Activated T-helper 2 cell treated with anti-CD3 and anti-CD28 coated beads, Interferon-gamma antibody, Interleukin-2, Interleukin-4, amounts not matched to agents 10 μg/mL and 5 μg/mL and 100 μg/mL, durations not matched to agents 14 hours and 24 hours and 36 hours (primary cell): ENCODE measurements at regions of chr12 and their contacts with region 1.

Region 1: GRCh38 chr12:110501752-110502738 is at the starts of genes RAD9B and VPS29:
- DNase-seq: peak; percentile 99
- H3K4me3 Mint-ChIP-seq: peak within 1 kb of the TSS; percentile 88
- H3K27ac Mint-ChIP-seq: peak within 1 kb of the TSS; percentile 91
- H3K4me1 Mint-ChIP-seq: peaks cover 24% of the 10 kb centered on the region
- H3K27me3 Mint-ChIP-seq: no peaks in the 10 kb centered on the region
- total RNA-seq, gene RAD9B: 0.28 and 0.41 TPM in 2 replicates
- total RNA-seq, gene VPS29: 103 and 107 TPM in 2 replicates

Region 2: GRCh38 chr12:110449799-110450497 is 52.1 kb before region 1 on chr12 and contains the start of gene ARPC3:
- intact Hi-C with region 1: loop called (anchors 1 kb)
- DNase-seq: peak; percentile 95
- H3K4me3 Mint-ChIP-seq: peak within 1 kb of the TSS; percentile 100
- H3K27ac Mint-ChIP-seq: peak within 1 kb of the TSS; percentile 99
- H3K4me1 Mint-ChIP-seq: peaks cover 24% of the 10 kb centered on the region
- H3K27me3 Mint-ChIP-seq: no peaks in the 10 kb centered on the region
- total RNA-seq, gene ARPC3: 312 and 338 TPM in 2 replicates

Region 3: GRCh38 chr12:110531741-110532333 is 29.8 kb after region 1 on chr12:
- intact Hi-C with region 1: no loop called
- DNase-seq: no peak
- H3K4me3 Mint-ChIP-seq: no peak overlapping the region
- H3K27ac Mint-ChIP-seq: peak overlapping the region; percentile 57
- H3K4me1 Mint-ChIP-seq: peaks cover 27% of the 10 kb centered on the region
- H3K27me3 Mint-ChIP-seq: no peaks in the 10 kb centered on the region